K562 (cell line): ENCODE measurements at regions of chr15 and their contacts with region 1.

Region 1: DNA sequence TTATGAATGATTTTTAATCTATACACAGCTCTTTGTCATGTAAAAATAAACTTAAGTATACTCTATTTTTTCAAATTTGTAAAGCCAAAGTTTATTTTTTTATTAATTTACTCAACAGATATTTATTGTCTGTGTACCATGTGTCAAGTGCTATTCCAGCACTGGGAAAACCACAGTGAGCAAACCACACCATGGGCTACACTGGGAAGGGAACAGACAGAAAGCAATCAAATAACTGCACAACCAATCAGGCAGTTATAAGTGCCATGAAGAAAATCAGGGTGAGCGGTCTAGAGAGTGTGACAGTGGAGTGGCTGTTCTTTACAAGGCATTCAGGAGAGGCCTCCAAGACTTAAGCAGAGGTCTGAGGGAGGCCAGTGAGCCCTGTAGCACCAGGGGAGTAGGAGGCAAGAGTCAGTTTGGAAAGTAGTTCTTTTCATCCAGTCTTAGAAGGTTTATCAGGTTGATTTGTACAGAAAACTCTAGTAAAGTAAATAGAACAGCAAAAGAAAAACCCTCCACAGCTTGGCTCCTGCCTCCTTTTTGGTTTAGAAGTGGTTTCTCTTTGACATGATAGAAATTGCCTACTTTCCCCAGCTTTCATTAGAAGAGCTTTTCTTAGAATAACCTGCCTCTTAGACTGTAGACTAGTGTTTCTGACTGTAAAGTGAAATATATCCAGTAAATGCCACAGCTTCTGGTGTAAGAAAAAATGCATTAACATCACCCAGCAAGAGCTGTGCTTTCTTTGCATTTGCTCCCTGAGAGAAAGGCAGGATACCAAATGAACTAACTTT is 13.7 kb downstream of the EIF2AK4 start:
- DNase-seq: no peak
- ATAC-seq: peak; percentile 22; the same call in 1 of the 3 replicates
- H3K4me3 ChIP-seq: no peak overlapping the region
- H3K27ac ChIP-seq: no peak overlapping the region
- H3K4me1 ChIP-seq: no peaks in the 10 kb centered on the region
- H3K27me3 ChIP-seq: no peaks in the 10 kb centered on the region
- CTCF ChIP-seq: no peak
- EP300 ChIP-seq: no peak
- POLR2A ChIP-seq: no peak
- RAD21 ChIP-seq: no peak

Region 2: DNA sequence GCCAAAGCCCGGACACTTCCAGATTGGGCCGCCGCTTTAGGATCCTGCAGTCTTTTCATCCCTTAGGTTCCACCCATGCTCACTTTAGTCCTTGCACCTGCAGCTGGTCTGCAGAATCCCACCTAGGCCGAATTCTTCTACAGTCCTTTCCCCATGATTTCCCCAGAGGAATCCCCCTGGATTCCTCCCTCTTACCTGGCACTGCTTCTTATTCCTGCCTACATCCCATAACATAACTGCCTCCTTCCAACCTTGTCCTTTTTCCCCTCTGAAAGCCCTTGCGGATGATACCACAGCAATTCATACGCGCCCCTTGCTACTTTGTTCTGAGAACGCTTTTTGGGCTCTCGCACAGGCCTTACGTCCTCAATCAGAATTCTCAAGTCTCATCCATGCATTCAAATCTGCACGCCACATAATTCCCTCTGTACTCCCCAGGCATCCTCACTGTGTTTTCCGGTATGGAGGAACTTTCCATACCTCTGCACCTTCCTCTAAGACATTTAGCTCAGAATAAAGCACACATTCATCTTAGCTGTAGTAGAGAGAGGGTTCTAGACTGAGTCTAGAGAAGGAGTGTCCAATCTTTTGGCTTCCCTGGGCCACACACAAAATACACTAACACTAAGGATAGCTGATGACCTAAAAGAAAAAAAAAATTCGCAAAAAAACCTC is 13.1 kb before region 1 on chr15:
- CTCF ChIA-PET with region 1: no interaction called
- POLR2A ChIA-PET with region 1: interaction called, 10 read pairs
- in situ Hi-C with region 1: no loop called
- intact Hi-C with region 1: no loop called
- DNase-seq: peak in 1 of 4 experiments; percentile 32
- ATAC-seq: peak; percentile 53
- H3K4me3 ChIP-seq: peak overlapping the region; percentile 74
- H3K27ac ChIP-seq: peak overlapping the region; percentile 66
- H3K4me1 ChIP-seq: peaks cover 3 to 11% of the 10 kb centered on the region in 2 experiments; a peak in 4 of 5 replicates
- H3K27me3 ChIP-seq: no peaks in the 10 kb centered on the region
- CTCF ChIP-seq: no peak
- EP300 ChIP-seq: no peak
- POLR2A ChIP-seq: no peak
- RAD21 ChIP-seq: no peak